GM12878 (cell line): ENCODE measurements at regions of chr6 and their contacts with region 1.

Region 1: GRCh38 chr6:82693094-82693493 is 329.5 kb downstream of the TPBG start:
- DNase-seq: no peak
- ATAC-seq: no peak
- H3K4me3 ChIP-seq: no peak overlapping the region
- H3K27ac ChIP-seq: no peak overlapping the region
- H3K4me1 ChIP-seq: no peaks in the 10 kb centered on the region
- H3K27me3 ChIP-seq: no peaks in the 10 kb centered on the region
- CTCF ChIP-seq: no peak
- EP300 ChIP-seq: no peak
- POLR2A ChIP-seq: no peak
- RAD21 ChIP-seq: no peak

Region 2: DNA sequence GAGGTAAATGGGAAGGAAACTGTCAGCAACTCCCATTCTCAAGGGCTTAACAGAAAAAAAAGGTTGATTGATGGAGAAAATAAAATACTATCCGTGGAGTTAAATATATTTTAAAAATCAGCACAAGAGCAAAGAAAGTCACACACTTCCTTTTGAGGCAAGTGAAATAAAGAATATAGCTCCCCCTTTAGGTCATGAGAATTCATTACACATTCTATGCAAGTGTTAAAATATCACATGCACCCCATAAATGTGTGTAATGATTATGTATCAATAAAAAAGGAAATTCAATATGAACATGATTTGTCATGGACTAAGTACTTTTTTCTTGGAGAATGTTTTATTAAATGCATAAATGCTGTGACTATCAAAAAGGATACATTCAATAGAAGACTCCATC is 19.8 kb after region 1 on chr6:
- CTCF ChIA-PET with region 1: interaction called, 10 read pairs
- POLR2A ChIA-PET with region 1: no interaction called
- RAD21 ChIA-PET with region 1: no interaction called
- SMC1A ChIA-PET with region 1: no interaction called
- in situ Hi-C with region 1: no loop called
- intact Hi-C with region 1: no loop called
- DNase-seq: no peak
- ATAC-seq: peak; percentile 61; the same call in 2 of the 3 replicates
- H3K4me3 ChIP-seq: no peak overlapping the region
- H3K27ac ChIP-seq: no peak overlapping the region
- H3K4me1 ChIP-seq: no peaks in the 10 kb centered on the region
- H3K27me3 ChIP-seq: no peaks in the 10 kb centered on the region
- CTCF ChIP-seq: peak in 2 of 3 experiments; percentile 26 to 42; a peak in 3 of 6 replicates
- EP300 ChIP-seq: no peak
- POLR2A ChIP-seq: no peak
- RAD21 ChIP-seq: peak; percentile 42

Region 3: GRCh38 chr6:82741996-82742385 is 48.9 kb after region 1 on chr6:
- CTCF ChIA-PET with region 1: no interaction called
- POLR2A ChIA-PET with region 1: no interaction called
- RAD21 ChIA-PET with region 1: no interaction called
- SMC1A ChIA-PET with region 1: no interaction called
- in situ Hi-C with region 1: no loop called
- intact Hi-C with region 1: no loop called
- DNase-seq: no peak
- ATAC-seq: no peak
- H3K4me3 ChIP-seq: no peak overlapping the region
- H3K27ac ChIP-seq: no peak overlapping the region
- H3K4me1 ChIP-seq: no peaks in the 10 kb centered on the region
- H3K27me3 ChIP-seq: no peaks in the 10 kb centered on the region; a peak in 2 of 4 replicates
- CTCF ChIP-seq: no peak
- EP300 ChIP-seq: no peak
- POLR2A ChIP-seq: no peak
- RAD21 ChIP-seq: no peak